ENCODE measurements at regions of chr22 and their contacts with region 1.

Region 1: DNA sequence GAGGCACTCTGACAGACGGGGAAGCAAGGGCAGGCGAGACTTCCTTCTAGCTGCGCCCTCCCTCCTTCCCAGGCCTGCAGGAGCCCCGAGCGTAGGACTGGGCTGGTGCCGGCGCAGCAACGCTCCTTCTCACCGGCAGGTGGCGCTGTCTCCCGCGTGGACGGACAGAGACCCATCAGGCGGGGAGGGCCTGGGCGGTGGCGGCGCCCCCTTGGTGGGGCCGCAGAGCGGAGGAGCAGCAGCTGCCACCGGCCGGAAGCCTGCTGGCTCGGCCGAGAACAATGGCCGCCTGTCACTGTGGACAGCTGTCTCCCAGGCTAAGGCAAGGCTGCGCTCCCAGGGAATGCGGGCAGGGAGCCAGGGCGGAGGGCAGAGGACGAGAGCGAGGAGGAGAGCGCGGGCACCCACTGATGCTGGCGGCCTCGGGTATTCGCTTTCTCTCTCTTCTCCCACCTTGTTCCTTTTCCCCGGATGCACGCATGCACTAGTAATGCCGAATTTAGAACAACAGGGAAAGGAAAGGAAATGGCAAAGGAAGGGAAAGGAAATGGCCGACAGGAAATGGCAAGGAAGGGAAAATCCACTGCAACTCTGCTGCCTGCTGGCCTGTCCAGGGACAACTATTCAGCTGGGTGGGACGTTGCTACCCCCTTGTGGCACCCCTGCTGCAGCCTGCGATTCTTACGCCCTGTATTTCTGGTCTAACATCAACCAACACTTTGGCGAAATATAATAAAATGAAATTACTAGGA is 14.4 kb downstream of the PPM1F start:
- DNase-seq: peak; percentile 89 to 90
- H3K4me3 ChIP-seq: peak overlapping the region; percentile 17 to 50 (median 31)
- H3K27ac ChIP-seq: peak overlapping the region; percentile 84 to 94 (median 86)
- H3K4me1 ChIP-seq: peaks cover 20 to 63% of the 10 kb centered on the region in 2 donors
- H3K27me3 ChIP-seq: no peaks in the 10 kb centered on the region
- CTCF ChIP-seq: peak; percentile 92 to 99 (median 98)
- POLR2A ChIP-seq: peak; percentile 19 to 21

Region 2: DNA sequence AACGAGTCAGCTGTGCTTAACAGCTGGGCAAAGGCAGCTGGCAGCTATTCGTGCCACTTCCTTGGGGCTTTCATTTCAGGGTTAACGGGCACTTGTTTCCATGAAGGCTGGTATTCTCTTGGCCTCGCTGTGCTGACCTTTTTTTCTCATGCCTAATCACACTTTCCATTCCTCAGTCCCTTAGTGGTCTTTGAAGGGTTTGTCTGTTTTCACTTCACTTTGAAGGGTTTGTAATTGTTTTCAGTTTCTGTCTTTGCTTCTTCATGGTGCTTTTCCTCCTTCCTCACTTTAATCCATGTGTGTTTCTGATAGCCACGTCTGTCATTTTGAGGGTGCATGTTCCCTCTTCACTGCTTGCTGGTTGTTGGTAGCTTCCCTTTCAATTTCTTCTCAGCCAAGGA is 247.8 kb before region 1 on chr22:
- intact Hi-C with region 1: no loop called
- DNase-seq: peak; percentile 37 to 44
- H3K4me3 ChIP-seq: no peak overlapping the region
- H3K27ac ChIP-seq: peak overlapping the region; percentile 31 to 52 (median 41)
- H3K4me1 ChIP-seq: peaks cover 7% of the 10 kb centered on the region in 2 donors
- H3K27me3 ChIP-seq: no peaks in the 10 kb centered on the region
- CTCF ChIP-seq: no peak
- POLR2A ChIP-seq: no peak

Region 3: DNA sequence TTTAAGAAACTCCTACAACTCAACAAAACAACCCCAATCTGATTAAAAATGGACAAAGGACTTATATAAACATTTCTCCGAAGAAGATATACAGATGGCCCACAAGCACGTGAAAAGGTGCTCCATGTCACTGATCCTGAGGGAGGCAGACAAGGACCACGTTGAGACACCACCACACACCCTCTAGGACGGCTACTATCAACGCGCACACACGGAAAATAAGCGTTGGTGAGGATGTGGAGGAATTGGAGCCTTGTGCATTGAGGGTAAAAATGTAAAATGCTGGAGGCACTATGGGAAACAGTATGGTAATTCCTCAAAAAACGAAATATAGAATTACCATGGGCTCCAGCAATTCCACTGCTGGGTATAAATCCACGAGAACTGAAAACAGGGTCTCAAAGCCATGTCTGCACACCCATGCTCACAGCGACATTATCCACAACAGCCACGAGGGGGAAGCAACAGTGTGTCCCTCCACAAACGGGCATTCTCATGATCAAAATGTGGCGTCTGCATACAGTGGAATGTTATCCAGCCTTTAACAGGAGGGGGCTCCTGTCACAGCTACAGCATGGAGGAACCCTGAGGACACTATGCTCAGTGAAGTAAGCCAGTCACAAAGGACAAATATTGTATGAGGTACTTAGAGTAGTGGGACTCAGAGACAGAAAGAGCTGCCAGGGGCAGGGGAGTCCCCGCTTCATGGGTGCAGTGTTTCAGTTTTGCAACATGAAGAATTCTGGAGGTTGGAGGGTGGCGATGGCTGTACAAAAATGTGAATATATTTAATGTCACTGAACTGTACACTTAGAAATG is 225.1 kb before region 1 on chr22:
- intact Hi-C with region 1: loop called (anchors 5 kb)
- DNase-seq: peak; percentile 71 to 76
- H3K4me3 ChIP-seq: no peak overlapping the region
- H3K27ac ChIP-seq: no peak overlapping the region
- H3K4me1 ChIP-seq: peaks cover 0 to 7% of the 10 kb centered on the region in 2 donors
- H3K27me3 ChIP-seq: no peaks in the 10 kb centered on the region
- CTCF ChIP-seq: peak; percentile 46 to 93 (median 74)
- POLR2A ChIP-seq: no peak

Region 4: GRCh38 chr22:21735200-21736076 is 202.8 kb before region 1 on chr22 and contains the start of gene YPEL1:
- intact Hi-C with region 1: loop called (anchors 5 kb)
- DNase-seq: peak; percentile 97 to 98
- H3K4me3 ChIP-seq: peak within 1 kb of the TSS; percentile 12 to 59 (median 28)
- H3K27ac ChIP-seq: peak within 1 kb of the TSS in 2 of 3 donors; percentile 38 to 52
- H3K4me1 ChIP-seq: peaks cover 6 to 8% of the 10 kb centered on the region in 2 donors
- H3K27me3 ChIP-seq: no peaks in the 10 kb centered on the region
- CTCF ChIP-seq: peak in 1 of 6 experiments; percentile 10
- POLR2A ChIP-seq: peak; percentile 58 to 99
- total RNA-seq, gene YPEL1: 4.1 to 6.7 (median 5.4) TPM

Region 5: DNA sequence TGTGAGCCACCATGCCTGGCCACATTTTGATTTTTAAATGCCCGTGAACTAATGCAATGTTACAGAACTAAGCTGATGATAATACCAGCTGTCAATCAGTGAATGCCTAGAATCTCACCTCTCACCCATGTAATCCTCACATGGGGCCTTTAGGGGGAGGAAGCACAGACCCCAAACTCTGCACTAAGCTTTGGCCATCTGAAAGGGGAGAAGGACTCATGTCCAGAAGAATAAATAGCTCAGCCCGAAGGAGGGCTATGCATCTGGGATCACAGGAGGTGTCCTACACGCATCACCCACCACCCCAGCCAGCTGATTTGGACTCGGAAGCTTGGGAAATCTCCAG is 166.6 kb before region 1 on chr22:
- intact Hi-C with region 1: loop called (anchors 5 kb)
- DNase-seq: no peak
- H3K4me3 ChIP-seq: no peak overlapping the region
- H3K27ac ChIP-seq: no peak overlapping the region
- H3K4me1 ChIP-seq: no peaks in the 10 kb centered on the region
- H3K27me3 ChIP-seq: no peaks in the 10 kb centered on the region
- CTCF ChIP-seq: no peak
- POLR2A ChIP-seq: no peak

Measured in thyroid gland (tissue), 4 donors.